ENCODE measurements at regions of chr1 and their contacts with region 1.

Region 1: DNA sequence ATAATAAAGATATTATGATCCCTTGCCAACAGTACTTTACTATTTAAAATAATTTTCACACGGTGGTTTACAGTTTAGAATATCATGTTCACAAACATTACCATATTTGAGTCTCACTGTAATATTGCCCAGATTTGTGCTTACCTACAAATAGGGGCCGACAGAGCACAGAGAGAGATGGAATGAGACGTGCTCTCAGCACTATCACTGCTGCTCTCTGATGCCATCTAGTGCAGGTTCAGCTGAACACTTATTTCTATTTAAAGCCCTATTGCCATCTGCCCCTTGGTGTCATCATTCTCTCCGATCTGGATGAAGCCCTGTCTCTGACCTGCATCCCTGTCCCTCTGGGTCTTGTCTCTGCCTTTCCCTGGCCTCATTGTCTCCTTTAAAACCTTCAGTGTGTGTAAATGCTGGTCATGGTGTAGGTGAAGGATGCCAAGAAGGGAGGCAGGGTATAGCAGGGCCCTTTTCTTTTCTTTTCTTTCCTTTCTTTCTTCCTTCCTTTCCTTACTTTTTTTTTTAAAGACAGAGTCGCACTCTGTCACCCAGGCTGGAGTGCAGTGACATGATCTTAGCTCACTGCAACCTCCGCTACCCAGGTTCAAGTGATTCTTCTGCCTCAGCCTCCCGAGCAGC is 6.9 kb upstream of the GPATCH4 start:
- DNase-seq: peak; percentile 71
- CTCF ChIP-seq: peak; percentile 66

Region 2: GRCh38 chr1:156456622-156457465 is 151.3 kb before region 1 on chr1:
- in situ Hi-C with region 1: loop called (anchors 5 kb)
- DNase-seq: peak; percentile 97
- CTCF ChIP-seq: no peak

Region 3: DNA sequence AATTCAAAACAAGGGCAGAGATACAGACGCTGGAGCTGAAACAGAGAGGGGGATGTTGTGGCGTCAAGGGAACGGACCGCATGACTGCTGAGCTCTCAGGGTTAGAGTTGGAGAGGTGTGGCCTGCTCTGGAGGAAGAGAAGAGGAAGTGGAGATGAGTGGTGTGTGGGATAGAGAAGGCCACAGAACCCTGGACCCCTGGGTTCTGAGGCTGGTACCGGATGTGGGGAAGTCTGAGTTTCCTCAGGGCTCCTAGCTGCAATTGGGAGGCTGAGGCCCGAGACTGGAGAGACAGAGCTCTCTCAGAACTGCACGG is 35.6 kb after region 1 on chr1:
- in situ Hi-C with region 1: no loop called
- DNase-seq: peak; percentile 72
- CTCF ChIP-seq: no peak

Region 4: DNA sequence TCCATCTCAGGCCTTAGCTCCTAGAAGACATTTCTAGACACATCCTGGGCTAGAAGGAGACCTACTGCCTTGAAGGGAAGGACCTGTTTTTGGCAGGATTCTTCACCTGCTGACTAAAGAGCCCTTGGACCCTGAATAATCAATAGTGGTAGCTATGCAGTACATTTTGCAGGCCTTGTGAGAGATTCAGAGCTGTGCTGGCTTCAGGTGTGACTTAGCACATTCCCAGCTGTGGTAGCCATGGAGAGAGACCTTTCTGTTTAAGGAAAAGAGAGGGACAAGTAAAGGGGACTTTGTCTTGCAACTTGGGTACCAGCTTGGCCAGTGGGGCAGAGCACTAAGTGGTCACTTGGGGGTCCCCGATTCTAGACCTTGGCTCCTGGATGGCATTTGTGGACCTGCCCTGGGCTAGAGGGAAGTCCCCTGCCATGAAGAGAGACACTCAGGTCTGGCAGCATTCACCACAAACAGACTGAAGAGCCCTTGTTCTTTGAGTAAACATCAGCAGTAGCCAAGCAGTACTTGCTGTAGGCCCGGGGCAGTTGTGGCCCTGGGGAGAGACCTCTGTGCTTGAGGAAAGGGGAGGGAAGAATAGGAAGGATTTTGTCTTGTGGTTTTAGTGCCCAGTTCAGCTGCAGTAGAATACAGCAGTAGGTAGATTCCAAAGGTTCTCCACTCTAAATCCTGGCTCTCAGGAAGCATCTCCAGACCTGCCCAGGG is 1619.9 kb after region 1 on chr1:
- in situ Hi-C with region 1: no loop called
- DNase-seq: no peak
- CTCF ChIP-seq: no peak